Caco-2 (cell line): ENCODE measurements at regions of chr7 and their contacts with region 1.

Region 1: GRCh38 chr7:138459413-138460175 is 465 bp upstream of the TRIM24 start:
- DNase-seq: peak; percentile 98
- H3K4me3 ChIP-seq: peak overlapping the region; percentile 31
- H3K4me3 Mint-ChIP-seq: peak overlapping the region; percentile 79
- H3K27ac Mint-ChIP-seq: peak overlapping the region; percentile 22
- H3K4me1 ChIP-seq: peaks cover 22% of the 10 kb centered on the region
- H3K4me1 Mint-ChIP-seq: no peaks in the 10 kb centered on the region
- H3K27me3 ChIP-seq: no peaks in the 10 kb centered on the region
- H3K27me3 Mint-ChIP-seq: no peaks in the 10 kb centered on the region
- CTCF ChIP-seq: peak in 1 of 2 experiments; percentile 41

Region 2: DNA sequence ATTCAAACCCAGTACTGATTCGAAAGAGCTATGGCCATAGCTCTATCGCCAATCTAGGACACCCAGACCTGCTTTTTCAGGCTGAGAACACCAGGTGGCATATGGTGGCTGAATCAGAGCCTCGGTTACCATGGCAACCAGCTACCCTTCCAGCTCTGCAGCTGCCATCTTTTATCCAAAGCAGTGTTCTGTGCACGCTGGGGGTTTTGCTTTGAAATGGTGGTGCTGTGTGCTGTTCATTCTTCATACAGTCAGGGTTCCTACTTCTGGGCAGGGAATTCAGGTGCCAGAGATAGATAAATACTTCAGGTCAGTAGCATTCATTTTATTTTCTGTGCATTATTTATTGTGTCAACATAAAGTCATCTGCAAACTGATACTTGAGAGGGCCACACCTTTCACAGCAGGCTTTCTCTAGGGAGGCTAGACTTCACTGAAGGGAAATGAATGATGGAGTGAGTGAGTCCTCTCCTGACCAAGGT is 298.0 kb before region 1 on chr7:
- CTCF ChIA-PET with region 1: no interaction called
- POLR2A ChIA-PET with region 1: no interaction called
- intact Hi-C with region 1: loop called (anchors 5 kb)
- DNase-seq: peak; percentile 83 to 92
- H3K4me3 ChIP-seq: no peak overlapping the region
- H3K4me3 Mint-ChIP-seq: no peak overlapping the region
- H3K27ac Mint-ChIP-seq: no peak overlapping the region
- H3K4me1 ChIP-seq: peaks cover 14% of the 10 kb centered on the region
- H3K4me1 Mint-ChIP-seq: peaks cover 12% of the 10 kb centered on the region
- H3K27me3 ChIP-seq: no peaks in the 10 kb centered on the region
- H3K27me3 Mint-ChIP-seq: no peaks in the 10 kb centered on the region
- CTCF ChIP-seq: peak; percentile 53 to 70

Region 3: DNA sequence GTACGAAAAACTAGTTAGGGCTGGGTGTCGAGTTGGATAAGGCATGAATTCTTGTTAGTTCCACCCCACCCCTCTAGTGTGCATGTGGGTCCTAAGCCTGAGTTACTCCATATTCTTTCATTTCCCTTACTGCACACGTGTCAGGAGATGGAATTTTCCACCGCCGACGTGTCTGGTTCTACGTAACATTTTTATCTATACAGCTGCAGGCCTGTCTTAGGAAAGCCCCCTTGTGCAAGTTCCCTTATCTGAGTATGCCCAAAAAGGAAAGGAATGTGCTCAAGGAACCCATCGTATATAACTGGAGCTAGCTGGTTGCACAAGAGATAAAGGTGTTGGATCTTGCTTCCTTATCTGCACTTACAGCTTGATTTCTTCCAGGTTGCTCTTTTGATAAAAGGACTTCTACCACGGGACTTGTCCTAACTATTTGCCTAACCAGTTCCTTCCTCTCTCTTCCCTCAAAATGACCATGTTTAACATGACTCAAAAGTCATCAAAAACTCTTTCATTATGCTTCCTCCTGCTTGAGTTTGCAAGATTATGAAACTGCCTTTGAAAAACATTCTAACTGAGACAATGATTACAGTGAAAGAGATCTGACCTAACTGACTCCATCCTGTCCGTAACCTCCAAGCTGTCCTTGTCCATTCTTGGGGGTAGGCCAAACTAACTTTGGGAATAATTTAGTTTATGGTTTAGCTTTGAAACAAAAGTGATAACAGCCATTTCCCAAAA is 202.0 kb before region 1 on chr7:
- CTCF ChIA-PET with region 1: no interaction called
- POLR2A ChIA-PET with region 1: no interaction called
- intact Hi-C with region 1: loop called (anchors 1 kb)
- DNase-seq: peak; percentile 79 to 90
- H3K4me3 ChIP-seq: no peak overlapping the region
- H3K4me3 Mint-ChIP-seq: peak overlapping the region; percentile 4
- H3K27ac Mint-ChIP-seq: peak overlapping the region; percentile 94
- H3K4me1 ChIP-seq: peaks cover 28% of the 10 kb centered on the region
- H3K4me1 Mint-ChIP-seq: peaks cover 10% of the 10 kb centered on the region
- H3K27me3 ChIP-seq: no peaks in the 10 kb centered on the region
- H3K27me3 Mint-ChIP-seq: no peaks in the 10 kb centered on the region
- CTCF ChIP-seq: no peak

Region 4: GRCh38 chr7:138396251-138397070 is 63.1 kb before region 1 on chr7:
- CTCF ChIA-PET with region 1: no interaction called
- POLR2A ChIA-PET with region 1: no interaction called
- intact Hi-C with region 1: loop called (anchors 2 kb)
- DNase-seq: peak; percentile 93 to 95
- H3K4me3 ChIP-seq: no peak overlapping the region
- H3K4me3 Mint-ChIP-seq: peak overlapping the region; percentile 67
- H3K27ac Mint-ChIP-seq: peak overlapping the region; percentile 97
- H3K4me1 ChIP-seq: peaks cover 15% of the 10 kb centered on the region
- H3K4me1 Mint-ChIP-seq: peaks cover 17% of the 10 kb centered on the region
- H3K27me3 ChIP-seq: no peaks in the 10 kb centered on the region
- H3K27me3 Mint-ChIP-seq: no peaks in the 10 kb centered on the region
- CTCF ChIP-seq: no peak

Region 5: GRCh38 chr7:138417078-138417700 is 42.4 kb before region 1 on chr7:
- CTCF ChIA-PET with region 1: no interaction called
- POLR2A ChIA-PET with region 1: no interaction called
- intact Hi-C with region 1: loop called (anchors 5 kb)
- DNase-seq: no peak
- H3K4me3 ChIP-seq: no peak overlapping the region
- H3K4me3 Mint-ChIP-seq: no peak overlapping the region
- H3K27ac Mint-ChIP-seq: no peak overlapping the region
- H3K4me1 ChIP-seq: peaks cover 20% of the 10 kb centered on the region
- H3K4me1 Mint-ChIP-seq: peaks cover 20% of the 10 kb centered on the region
- H3K27me3 ChIP-seq: no peaks in the 10 kb centered on the region; the same call in 1 of the 2 replicates
- H3K27me3 Mint-ChIP-seq: no peaks in the 10 kb centered on the region
- CTCF ChIP-seq: no peak

Region 6: DNA sequence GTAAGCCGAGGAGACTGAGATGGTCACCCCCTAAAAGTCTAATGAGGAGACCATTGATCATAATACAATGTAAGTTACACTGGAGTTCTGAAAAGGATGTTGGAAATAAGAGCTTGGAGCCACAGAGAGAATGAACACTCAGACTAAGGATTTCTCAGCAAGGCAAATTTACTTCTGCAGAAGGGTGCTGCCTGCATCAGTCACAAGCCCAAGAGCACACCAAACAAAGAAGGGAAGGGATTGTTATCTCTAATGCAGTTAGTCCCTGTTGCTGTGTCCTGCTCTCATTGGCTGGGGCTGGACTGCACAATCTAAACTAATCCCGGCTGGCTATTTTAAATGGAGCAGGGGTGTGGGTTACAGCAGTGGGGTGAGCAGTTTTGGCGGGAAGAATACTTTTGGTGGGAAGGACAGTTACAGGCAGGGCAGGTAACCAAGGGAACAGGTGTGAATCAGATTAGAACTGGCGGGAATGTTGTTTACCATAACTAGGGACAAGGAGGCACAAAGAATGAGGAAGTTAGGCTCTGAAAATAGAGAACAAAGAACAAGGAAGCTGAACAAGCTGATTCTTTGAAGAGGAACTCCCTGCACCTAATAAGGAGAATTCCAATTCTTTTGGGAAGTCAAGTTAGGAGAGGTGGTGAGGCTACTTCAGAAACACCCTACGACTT is 29.9 kb before region 1 on chr7:
- CTCF ChIA-PET with region 1: no interaction called
- POLR2A ChIA-PET with region 1: no interaction called
- intact Hi-C with region 1: no loop called
- DNase-seq: no peak
- H3K4me3 ChIP-seq: no peak overlapping the region
- H3K4me3 Mint-ChIP-seq: no peak overlapping the region
- H3K27ac Mint-ChIP-seq: no peak overlapping the region
- H3K4me1 ChIP-seq: no peaks in the 10 kb centered on the region
- H3K4me1 Mint-ChIP-seq: no peaks in the 10 kb centered on the region
- H3K27me3 ChIP-seq: no peaks in the 10 kb centered on the region
- H3K27me3 Mint-ChIP-seq: no peaks in the 10 kb centered on the region
- CTCF ChIP-seq: no peak

Region 7: GRCh38 chr7:138663725-138664710 is 204.4 kb after region 1 on chr7:
- CTCF ChIA-PET with region 1: no interaction called
- POLR2A ChIA-PET with region 1: no interaction called
- intact Hi-C with region 1: loop called (anchors 5 kb)
- DNase-seq: peak; percentile 60 to 76
- H3K4me3 ChIP-seq: no peak overlapping the region
- H3K4me3 Mint-ChIP-seq: peak overlapping the region; percentile 30
- H3K27ac Mint-ChIP-seq: peak overlapping the region; percentile 48
- H3K4me1 ChIP-seq: peaks cover 61% of the 10 kb centered on the region
- H3K4me1 Mint-ChIP-seq: peaks cover 50% of the 10 kb centered on the region
- H3K27me3 ChIP-seq: no peaks in the 10 kb centered on the region
- H3K27me3 Mint-ChIP-seq: no peaks in the 10 kb centered on the region
- CTCF ChIP-seq: no peak

Region 8: GRCh38 chr7:138705167-138705566 is 245.6 kb after region 1 on chr7:
- CTCF ChIA-PET with region 1: no interaction called
- POLR2A ChIA-PET with region 1: no interaction called
- intact Hi-C with region 1: no loop called
- DNase-seq: no peak
- H3K4me3 ChIP-seq: no peak overlapping the region
- H3K4me3 Mint-ChIP-seq: no peak overlapping the region
- H3K27ac Mint-ChIP-seq: no peak overlapping the region
- H3K4me1 ChIP-seq: no peaks in the 10 kb centered on the region
- H3K4me1 Mint-ChIP-seq: no peaks in the 10 kb centered on the region
- H3K27me3 ChIP-seq: no peaks in the 10 kb centered on the region
- H3K27me3 Mint-ChIP-seq: no peaks in the 10 kb centered on the region
- CTCF ChIP-seq: no peak

Region 9: GRCh38 chr7:139075031-139075652 is 615.5 kb after region 1 on chr7:
- CTCF ChIA-PET with region 1: no interaction called
- POLR2A ChIA-PET with region 1: no interaction called
- intact Hi-C with region 1: no loop called
- DNase-seq: peak; percentile 64 to 77
- H3K4me3 ChIP-seq: no peak overlapping the region
- H3K4me3 Mint-ChIP-seq: no peak overlapping the region
- H3K27ac Mint-ChIP-seq: no peak overlapping the region
- H3K4me1 ChIP-seq: no peaks in the 10 kb centered on the region
- H3K4me1 Mint-ChIP-seq: no peaks in the 10 kb centered on the region
- H3K27me3 ChIP-seq: no peaks in the 10 kb centered on the region
- H3K27me3 Mint-ChIP-seq: no peaks in the 10 kb centered on the region
- CTCF ChIP-seq: peak; percentile 77 to 79